ENCODE measurements at regions of chr17 and their contacts with region 1.

Region 1: GRCh38 chr17:82228842-82229697 is at the start of gene SLC16A3:
- DNase-seq: no peak
- H3K4me3 ChIP-seq: peak within 1 kb of the TSS; percentile 76
- H3K27ac ChIP-seq: peak within 1 kb of the TSS; percentile 39
- H3K27me3 ChIP-seq: no peaks in the 10 kb centered on the region
- CTCF ChIP-seq: no peak
- polyA plus RNA-seq, gene SLC16A3: 61.7 and 80.3 TPM in 2 replicates

Region 2: GRCh38 chr17:82205719-82206508 is 23.2 kb before region 1 on chr17:
- CTCF ChIA-PET with region 1: interaction called, 6 read pairs
- POLR2A ChIA-PET with region 1: interaction called, 10 read pairs
- DNase-seq: peak; percentile 65
- H3K4me3 ChIP-seq: peak overlapping the region; percentile 4; the same call in 1 of the 2 replicates
- H3K27ac ChIP-seq: peak overlapping the region; percentile 57
- H3K27me3 ChIP-seq: no peaks in the 10 kb centered on the region
- CTCF ChIP-seq: peak; percentile 86

Region 3: GRCh38 chr17:82212331-82213250 is 16.5 kb before region 1 on chr17 and contains the start of gene CCDC57:
- CTCF ChIA-PET with region 1: no interaction called
- POLR2A ChIA-PET with region 1: interaction called, 16 read pairs
- DNase-seq: no peak
- H3K4me3 ChIP-seq: peak within 1 kb of the TSS; percentile 71
- H3K27ac ChIP-seq: peak within 1 kb of the TSS; percentile 70
- H3K27me3 ChIP-seq: no peaks in the 10 kb centered on the region
- CTCF ChIP-seq: no peak
- polyA plus RNA-seq, gene CCDC57: 11.1 and 13.2 TPM in 2 replicates